ENCODE measurements at regions of chr2 and their contacts with region 1.

Region 1: DNA sequence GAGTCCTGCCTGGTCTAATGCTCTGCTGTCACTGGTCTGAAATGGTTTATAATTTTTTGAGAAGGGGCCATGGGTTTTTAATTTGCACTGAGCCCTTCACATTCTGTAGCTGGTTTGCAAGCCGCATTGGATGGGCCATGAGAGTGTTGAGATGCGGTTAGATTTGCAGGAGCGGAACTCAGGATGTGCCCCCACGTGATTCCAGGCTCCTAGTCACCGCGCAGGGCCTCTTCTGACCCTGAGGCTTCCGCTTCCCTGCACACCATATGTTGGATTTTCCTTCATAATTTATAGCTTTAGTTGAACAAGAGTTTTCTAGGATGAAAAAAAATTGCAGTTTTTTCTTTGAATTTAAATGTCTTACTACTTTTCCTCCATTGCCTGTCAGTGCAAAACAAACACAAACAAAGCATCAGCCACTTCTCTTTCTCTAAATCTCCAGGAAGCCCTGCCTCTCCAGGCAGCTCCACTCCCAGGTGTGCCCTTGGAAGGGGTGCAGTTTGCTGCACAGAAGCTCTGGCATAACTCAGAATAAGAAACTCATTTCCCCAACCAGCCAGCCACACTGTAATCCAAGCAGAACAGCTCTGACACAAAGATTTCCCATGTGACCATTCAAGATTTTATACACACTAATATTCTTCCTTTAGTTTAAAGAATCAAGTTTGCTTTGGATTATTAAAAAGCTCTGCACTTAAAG is 18.4 kb upstream of the TPO start:
- DNase-seq: no peak
- ATAC-seq: no peak
- H3K4me3 Mint-ChIP-seq: no peak overlapping the region
- H3K27ac Mint-ChIP-seq: no peak overlapping the region
- H3K4me1 Mint-ChIP-seq: peaks cover 3% of the 10 kb centered on the region
- H3K27me3 Mint-ChIP-seq: no peaks in the 10 kb centered on the region

Region 2: DNA sequence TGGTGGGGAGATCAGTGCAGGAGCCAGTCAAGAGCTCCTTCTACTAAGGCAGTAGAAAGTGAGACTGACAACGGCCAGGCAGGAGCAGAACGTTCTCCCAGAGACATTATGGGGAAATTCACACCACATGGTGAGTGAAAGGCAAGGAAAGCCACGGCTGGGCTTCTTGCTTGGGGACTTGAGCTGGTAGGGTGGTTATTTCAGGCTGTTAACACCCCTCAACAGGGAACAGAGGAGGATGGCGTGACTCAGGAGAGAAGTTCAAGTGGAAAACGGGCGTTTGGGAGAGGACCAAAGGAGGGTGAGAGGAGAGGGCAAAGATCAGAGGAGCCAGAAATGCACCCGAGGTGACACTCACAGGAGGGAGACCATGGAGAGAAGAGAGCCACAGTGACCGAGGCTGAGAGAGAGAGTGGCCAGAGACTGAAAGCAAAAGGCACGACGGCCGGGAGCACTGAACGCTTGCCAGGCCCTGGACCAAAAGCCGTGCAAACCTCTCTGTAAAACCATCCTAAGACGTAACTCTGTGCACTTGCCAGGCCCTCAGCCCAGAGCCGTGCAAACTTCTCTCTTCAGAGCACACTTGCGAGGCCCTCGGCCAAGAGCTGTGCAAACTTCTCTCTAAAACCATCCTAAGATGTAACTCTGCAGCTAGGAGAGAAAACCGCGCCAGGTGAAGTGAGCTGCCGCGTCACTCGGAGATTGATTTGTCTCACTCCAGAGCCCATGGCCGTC is 26.1 kb after region 1 on chr2:
- CTCF ChIA-PET with region 1: no interaction called
- POLR2A ChIA-PET with region 1: no interaction called
- intact Hi-C with region 1: loop called in 1 of 2 experiments (anchors 1 kb)
- DNase-seq: no peak
- ATAC-seq: no peak
- H3K4me3 Mint-ChIP-seq: no peak overlapping the region
- H3K27ac Mint-ChIP-seq: no peak overlapping the region
- H3K4me1 Mint-ChIP-seq: no peaks in the 10 kb centered on the region
- H3K27me3 Mint-ChIP-seq: no peaks in the 10 kb centered on the region

Region 3: DNA sequence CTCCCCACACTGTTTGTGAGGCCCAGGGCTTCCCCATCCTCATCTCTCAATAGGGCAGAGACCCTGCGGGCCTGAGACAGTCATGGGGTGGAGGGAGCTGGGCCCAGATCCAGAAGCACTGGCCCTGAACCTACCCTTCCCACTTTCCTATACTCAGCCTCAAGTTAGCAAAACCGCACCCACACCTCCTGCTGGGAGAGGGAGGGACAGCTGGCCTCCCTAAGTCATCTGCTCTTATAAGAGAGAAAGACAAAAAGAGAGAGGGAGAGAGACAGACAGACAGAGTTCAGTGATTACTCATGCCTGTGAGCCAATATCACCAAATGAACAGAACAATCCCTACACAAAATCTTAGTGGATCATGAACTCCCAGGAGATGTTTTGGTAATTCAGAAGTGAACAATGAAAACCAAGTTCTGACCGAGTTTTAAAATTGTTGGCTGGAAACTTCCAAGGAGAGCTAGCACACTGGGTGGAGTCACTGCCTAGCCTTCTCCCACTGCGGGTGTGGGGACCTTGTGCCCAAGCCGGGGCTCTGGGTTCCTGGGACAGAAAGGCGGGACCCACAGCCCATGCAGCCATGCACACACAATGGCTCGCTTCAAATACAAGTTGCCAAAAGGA is 219.0 kb after region 1 on chr2:
- CTCF ChIA-PET with region 1: no interaction called
- POLR2A ChIA-PET with region 1: no interaction called
- intact Hi-C with region 1: no loop called
- DNase-seq: no peak
- ATAC-seq: no peak
- H3K4me3 Mint-ChIP-seq: no peak overlapping the region
- H3K27ac Mint-ChIP-seq: no peak overlapping the region
- H3K4me1 Mint-ChIP-seq: no peaks in the 10 kb centered on the region
- H3K27me3 Mint-ChIP-seq: peaks cover 5% of the 10 kb centered on the region